Heart left ventricle (tissue), 16 donors: ENCODE measurements at regions of chr3 and their contacts with region 1.

Region 1: DNA sequence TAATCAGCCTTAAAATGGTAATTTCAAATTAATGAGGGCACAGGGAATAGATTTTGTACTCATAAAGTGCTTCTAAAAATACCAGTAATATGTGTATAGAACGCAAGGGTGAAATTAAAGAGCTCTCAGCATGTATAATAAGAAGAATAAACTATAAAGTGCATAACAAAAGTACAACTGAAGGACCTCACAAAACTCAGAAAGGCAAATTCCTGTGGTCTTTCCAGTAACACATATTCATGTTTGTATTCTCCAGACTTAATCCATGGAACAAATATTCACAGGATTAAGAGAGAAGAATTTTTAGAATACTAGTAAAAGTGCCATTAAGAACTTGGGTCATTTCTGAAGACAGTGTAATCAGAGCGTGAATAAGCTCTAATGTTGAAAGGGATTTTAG is 646.3 kb downstream of the CADM2 start:
- DNase-seq: no peak
- ATAC-seq: no peak
- H3K4me3 ChIP-seq: no peak overlapping the region
- H3K27ac ChIP-seq: no peak overlapping the region
- H3K4me1 ChIP-seq: no peaks in the 10 kb centered on the region
- H3K27me3 ChIP-seq: peaks cover 0 to 4% (median 0%) of the 10 kb centered on the region in 9 donors
- CTCF ChIP-seq: no peak
- POLR2A ChIP-seq: no peak

Region 2: GRCh38 chr3:85495602-85496001 is 109.5 kb before region 1 on chr3:
- intact Hi-C with region 1: no loop called
- DNase-seq: peak in 1 of 5 donors; percentile 14
- ATAC-seq: no peak
- H3K4me3 ChIP-seq: no peak overlapping the region
- H3K27ac ChIP-seq: no peak overlapping the region
- H3K4me1 ChIP-seq: no peaks in the 10 kb centered on the region
- H3K27me3 ChIP-seq: no peaks in the 10 kb centered on the region
- CTCF ChIP-seq: no peak
- POLR2A ChIP-seq: no peak

Region 3: DNA sequence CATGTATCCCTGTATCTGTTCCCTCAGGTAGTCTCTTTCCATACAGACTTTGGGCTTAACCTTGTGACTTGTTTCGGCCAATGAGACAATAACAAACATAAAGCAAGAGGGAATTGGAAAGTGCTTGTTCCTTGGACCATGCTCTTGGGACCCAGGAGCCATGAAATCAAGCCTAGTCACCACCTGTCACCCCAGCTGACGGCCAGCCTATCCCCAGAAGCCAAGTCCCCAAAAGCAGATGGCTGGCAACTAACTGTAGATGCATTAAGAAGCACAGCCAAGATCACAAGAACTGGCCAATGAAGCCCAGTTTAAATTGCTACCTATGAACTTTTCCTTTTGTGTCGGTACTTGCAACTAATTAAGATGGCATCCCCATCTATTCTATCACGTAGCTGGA is 175.7 kb after region 1 on chr3:
- intact Hi-C with region 1: no loop called
- DNase-seq: no peak
- ATAC-seq: no peak
- H3K4me3 ChIP-seq: no peak overlapping the region
- H3K27ac ChIP-seq: no peak overlapping the region
- H3K4me1 ChIP-seq: peaks cover 0 to 24% (median 0%) of the 10 kb centered on the region in 12 donors
- H3K27me3 ChIP-seq: no peaks in the 10 kb centered on the region
- CTCF ChIP-seq: no peak
- POLR2A ChIP-seq: no peak

Region 4: DNA sequence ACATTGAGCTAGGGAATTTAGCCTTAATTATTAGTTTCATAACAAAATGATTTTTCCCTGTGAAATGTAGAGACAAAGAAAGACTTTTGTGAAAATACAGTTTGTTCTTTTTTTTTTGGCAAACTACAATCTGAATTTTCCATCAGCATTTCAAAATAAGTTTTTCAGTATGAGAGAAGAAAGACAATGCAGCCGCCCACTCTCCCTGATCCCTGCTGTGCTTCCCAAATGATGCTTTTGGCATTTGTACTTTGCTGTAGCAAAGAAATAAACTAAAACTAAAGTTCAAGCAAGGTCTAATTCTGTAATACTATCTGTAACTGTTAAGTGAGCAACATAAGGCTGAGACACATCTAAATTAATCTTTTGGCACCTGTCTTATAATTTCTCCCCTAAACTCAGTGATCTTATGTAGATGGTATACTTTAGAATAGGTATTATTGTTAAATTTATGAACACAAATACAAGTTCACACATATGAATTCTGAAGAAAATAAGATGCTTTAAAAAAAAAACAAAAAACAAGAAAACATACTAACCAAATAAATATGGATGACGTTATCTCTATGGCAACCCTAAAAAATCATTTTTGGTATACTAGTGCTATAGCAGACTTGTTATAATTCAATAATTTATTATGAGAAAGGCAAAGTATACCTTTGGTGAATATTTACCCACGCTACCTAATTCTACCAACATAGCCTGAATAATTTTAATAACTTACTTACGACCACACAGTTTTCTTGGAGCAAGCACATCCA is 603.9 kb after region 1 on chr3:
- intact Hi-C with region 1: loop called in 1 of 10 experiments (anchors 10 kb)
- DNase-seq: no peak
- ATAC-seq: no peak
- H3K4me3 ChIP-seq: no peak overlapping the region
- H3K27ac ChIP-seq: no peak overlapping the region
- H3K4me1 ChIP-seq: no peaks in the 10 kb centered on the region
- H3K27me3 ChIP-seq: no peaks in the 10 kb centered on the region
- CTCF ChIP-seq: no peak
- POLR2A ChIP-seq: no peak